ENCODE measurements at regions of chr3 and their contacts with region 1.

Region 1: GRCh38 chr3:21803604-21804003 is 52.6 kb upstream of the ZNF385D start:
- DNase-seq: no peak
- ATAC-seq: no peak
- H3K4me3 ChIP-seq: no peak overlapping the region
- H3K27ac ChIP-seq: no peak overlapping the region
- H3K4me1 ChIP-seq: no peaks in the 10 kb centered on the region
- H3K27me3 ChIP-seq: no peaks in the 10 kb centered on the region
- CTCF ChIP-seq: no peak

Region 2: DNA sequence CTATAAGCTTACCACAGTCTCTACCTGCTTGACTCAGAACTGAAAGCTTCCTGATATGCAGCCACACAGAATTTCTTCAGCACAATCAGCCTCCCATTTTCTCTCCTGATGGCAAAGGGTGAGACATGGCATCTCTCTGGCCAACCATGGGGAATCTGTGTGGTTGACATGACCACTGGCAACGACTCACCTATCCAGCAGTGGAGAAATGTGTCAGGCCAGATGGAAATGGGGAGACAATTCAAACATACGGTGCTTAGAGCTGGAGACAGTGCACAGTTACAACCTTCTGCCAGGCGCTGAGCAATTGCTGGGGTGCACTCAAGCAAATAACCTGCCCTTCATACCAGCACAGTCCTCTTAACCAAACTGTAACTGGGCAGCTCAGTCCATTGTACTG is 56.2 kb before region 1 on chr3:
- CTCF ChIA-PET with region 1: no interaction called
- POLR2A ChIA-PET with region 1: no interaction called
- intact Hi-C with region 1: no loop called
- DNase-seq: peak; percentile 40
- ATAC-seq: no peak
- H3K4me3 ChIP-seq: no peak overlapping the region
- H3K27ac ChIP-seq: no peak overlapping the region
- H3K4me1 ChIP-seq: peaks cover 40% of the 10 kb centered on the region
- H3K27me3 ChIP-seq: no peaks in the 10 kb centered on the region
- CTCF ChIP-seq: no peak

Region 3: GRCh38 chr3:21781355-21781754 is 22.2 kb before region 1 on chr3:
- CTCF ChIA-PET with region 1: no interaction called
- POLR2A ChIA-PET with region 1: no interaction called
- intact Hi-C with region 1: loop called (anchors 1 kb)
- DNase-seq: peak; percentile 78
- ATAC-seq: peak; percentile 87
- H3K4me3 ChIP-seq: no peak overlapping the region
- H3K27ac ChIP-seq: 0 out of 2 replicates have a peak overlapping the region, but pooled peaks have one; percentile 0
- H3K4me1 ChIP-seq: peaks cover 20% of the 10 kb centered on the region
- H3K27me3 ChIP-seq: no peaks in the 10 kb centered on the region
- CTCF ChIP-seq: no peak